ENCODE measurements at regions of chr20 and their contacts with region 1.

Region 1: DNA sequence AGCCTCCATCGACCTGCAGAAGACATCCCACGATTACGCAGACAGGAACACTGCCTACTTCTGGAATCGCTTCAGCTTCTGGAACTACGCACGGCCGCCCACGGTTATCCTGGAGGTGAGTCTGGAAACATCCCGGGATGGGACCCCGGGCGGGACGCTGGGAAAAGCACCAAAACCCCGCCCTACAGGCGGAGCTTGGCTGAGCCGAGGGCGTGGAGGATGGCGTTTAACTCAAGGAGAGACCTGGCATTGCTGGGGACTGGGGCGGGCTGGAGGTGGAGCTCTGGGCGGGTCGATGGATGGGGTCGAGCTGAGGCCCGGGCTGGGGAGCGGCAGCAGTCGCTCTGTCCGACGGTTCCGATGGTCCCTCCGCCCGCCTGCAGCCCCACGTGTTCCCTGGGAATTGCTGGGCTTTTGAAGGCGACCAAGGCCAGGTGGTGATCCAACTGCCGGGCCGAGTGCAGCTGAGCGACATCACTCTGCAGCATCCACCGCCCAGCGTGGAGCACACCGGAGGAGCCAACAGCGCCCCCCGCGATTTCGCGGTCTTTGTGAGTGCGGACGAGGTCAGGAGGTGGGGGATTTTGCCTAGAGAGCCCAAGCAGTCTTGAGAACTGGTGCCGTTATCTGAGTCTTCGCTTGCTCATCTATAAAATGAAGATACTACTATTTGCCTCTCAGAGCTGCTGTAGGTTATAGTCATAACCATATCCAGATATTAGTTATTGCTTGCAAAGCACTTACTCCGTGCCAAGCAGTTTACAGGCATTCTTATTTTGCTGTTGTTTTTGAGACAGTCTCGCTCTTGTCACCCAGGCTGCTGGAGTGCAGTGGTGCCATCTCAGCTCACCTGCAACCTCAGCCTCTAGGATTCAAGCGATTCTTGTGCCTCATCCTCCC is 3.8 kb downstream of the SPAG4 start:
- DNase-seq: peak; percentile 74
- ATAC-seq: peak; percentile 23
- H3K4me3 Mint-ChIP-seq: peak overlapping the region; percentile 87
- H3K27ac Mint-ChIP-seq: peak overlapping the region; percentile 66
- H3K4me1 Mint-ChIP-seq: peaks cover 40% of the 10 kb centered on the region
- H3K27me3 Mint-ChIP-seq: peaks cover 2% of the 10 kb centered on the region
- CTCF ChIP-seq: no peak

Region 2: GRCh38 chr20:34997131-34997561 is 622.3 kb before region 1 on chr20:
- CTCF ChIA-PET with region 1: no interaction called
- POLR2A ChIA-PET with region 1: no interaction called
- intact Hi-C with region 1: no loop called
- DNase-seq: no peak
- ATAC-seq: no peak
- H3K4me3 Mint-ChIP-seq: no peak overlapping the region
- H3K27ac Mint-ChIP-seq: no peak overlapping the region
- H3K4me1 Mint-ChIP-seq: peaks cover 3% of the 10 kb centered on the region
- H3K27me3 Mint-ChIP-seq: no peaks in the 10 kb centered on the region
- CTCF ChIP-seq: no peak

Region 3: GRCh38 chr20:35092524-35093266 is 526.8 kb before region 1 on chr20 and contains the start of gene TRPC4AP:
- CTCF ChIA-PET with region 1: no interaction called
- POLR2A ChIA-PET with region 1: no interaction called
- intact Hi-C with region 1: loop called (anchors 5 kb)
- DNase-seq: peak; percentile 87
- ATAC-seq: peak; percentile 97
- H3K4me3 Mint-ChIP-seq: peak within 1 kb of the TSS; percentile 95
- H3K27ac Mint-ChIP-seq: peak within 1 kb of the TSS; percentile 91
- H3K4me1 Mint-ChIP-seq: peaks cover 49% of the 10 kb centered on the region
- H3K27me3 Mint-ChIP-seq: no peaks in the 10 kb centered on the region
- CTCF ChIP-seq: peak; percentile 34
- total RNA-seq, gene TRPC4AP: 58.3 and 60.2 TPM in 2 replicates

Region 4: DNA sequence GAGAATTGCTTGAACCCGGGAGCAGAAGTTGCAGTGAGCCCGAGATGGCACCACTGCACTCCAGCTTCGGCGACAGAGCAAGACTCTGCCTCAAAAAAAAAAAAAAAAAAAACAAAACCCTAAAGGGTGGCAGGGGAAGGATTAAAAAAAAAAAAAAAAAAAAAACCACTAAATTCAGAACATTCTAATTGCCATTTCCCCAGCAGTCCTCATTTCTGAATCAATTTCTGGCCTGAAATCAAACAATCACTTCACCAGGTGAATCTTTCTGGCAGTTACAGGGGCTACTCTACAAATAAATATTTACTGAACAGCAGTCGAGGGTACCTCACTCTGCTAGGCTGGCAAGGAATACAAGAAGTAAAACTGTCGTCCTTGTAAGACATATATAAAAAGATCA is 208.8 kb before region 1 on chr20:
- CTCF ChIA-PET with region 1: no interaction called
- POLR2A ChIA-PET with region 1: interaction called, 4 read pairs
- intact Hi-C with region 1: loop called (anchors 5 kb)
- DNase-seq: no peak
- ATAC-seq: no peak
- H3K4me3 Mint-ChIP-seq: peak overlapping the region; percentile 97
- H3K27ac Mint-ChIP-seq: no peak overlapping the region
- H3K4me1 Mint-ChIP-seq: peaks cover 19% of the 10 kb centered on the region
- H3K27me3 Mint-ChIP-seq: no peaks in the 10 kb centered on the region
- CTCF ChIP-seq: no peak

Region 5: GRCh38 chr20:35463455-35464300 is 155.8 kb before region 1 on chr20:
- CTCF ChIA-PET with region 1: interaction called, 11 read pairs
- POLR2A ChIA-PET with region 1: interaction called, 6 read pairs
- intact Hi-C with region 1: loop called (anchors 1 kb)
- DNase-seq: no peak
- ATAC-seq: peak; percentile 84
- H3K4me3 Mint-ChIP-seq: no peak overlapping the region
- H3K27ac Mint-ChIP-seq: no peak overlapping the region
- H3K4me1 Mint-ChIP-seq: peaks cover 13% of the 10 kb centered on the region
- H3K27me3 Mint-ChIP-seq: no peaks in the 10 kb centered on the region
- CTCF ChIP-seq: no peak

Region 6: GRCh38 chr20:35541783-35542588 is 77.5 kb before region 1 on chr20 and contains the start of gene ERGIC3:
- CTCF ChIA-PET with region 1: interaction called, 4 read pairs
- POLR2A ChIA-PET with region 1: interaction called, 8 read pairs
- intact Hi-C with region 1: loop called (anchors 1 kb)
- DNase-seq: peak; percentile 97
- ATAC-seq: peak; percentile 92
- H3K4me3 Mint-ChIP-seq: peak within 1 kb of the TSS; percentile 92
- H3K27ac Mint-ChIP-seq: peak within 1 kb of the TSS; percentile 77
- H3K4me1 Mint-ChIP-seq: peaks cover 21% of the 10 kb centered on the region
- H3K27me3 Mint-ChIP-seq: no peaks in the 10 kb centered on the region
- CTCF ChIP-seq: no peak
- total RNA-seq, gene ERGIC3: 159 and 183 TPM in 2 replicates

Region 7: GRCh38 chr20:35638751-35639150 is 19.3 kb after region 1 on chr20:
- CTCF ChIA-PET with region 1: interaction called, 3 read pairs
- POLR2A ChIA-PET with region 1: no interaction called
- intact Hi-C with region 1: loop called (anchors 2 kb)
- DNase-seq: no peak
- ATAC-seq: no peak
- H3K4me3 Mint-ChIP-seq: no peak overlapping the region
- H3K27ac Mint-ChIP-seq: no peak overlapping the region
- H3K4me1 Mint-ChIP-seq: peaks cover 28% of the 10 kb centered on the region
- H3K27me3 Mint-ChIP-seq: no peaks in the 10 kb centered on the region
- CTCF ChIP-seq: no peak

Region 8: GRCh38 chr20:35673884-35674283 is 54.4 kb after region 1 on chr20:
- CTCF ChIA-PET with region 1: no interaction called
- POLR2A ChIA-PET with region 1: no interaction called
- intact Hi-C with region 1: no loop called
- DNase-seq: no peak
- ATAC-seq: no peak
- H3K4me3 Mint-ChIP-seq: no peak overlapping the region
- H3K27ac Mint-ChIP-seq: no peak overlapping the region
- H3K4me1 Mint-ChIP-seq: no peaks in the 10 kb centered on the region
- H3K27me3 Mint-ChIP-seq: no peaks in the 10 kb centered on the region
- CTCF ChIP-seq: no peak

Region 9: DNA sequence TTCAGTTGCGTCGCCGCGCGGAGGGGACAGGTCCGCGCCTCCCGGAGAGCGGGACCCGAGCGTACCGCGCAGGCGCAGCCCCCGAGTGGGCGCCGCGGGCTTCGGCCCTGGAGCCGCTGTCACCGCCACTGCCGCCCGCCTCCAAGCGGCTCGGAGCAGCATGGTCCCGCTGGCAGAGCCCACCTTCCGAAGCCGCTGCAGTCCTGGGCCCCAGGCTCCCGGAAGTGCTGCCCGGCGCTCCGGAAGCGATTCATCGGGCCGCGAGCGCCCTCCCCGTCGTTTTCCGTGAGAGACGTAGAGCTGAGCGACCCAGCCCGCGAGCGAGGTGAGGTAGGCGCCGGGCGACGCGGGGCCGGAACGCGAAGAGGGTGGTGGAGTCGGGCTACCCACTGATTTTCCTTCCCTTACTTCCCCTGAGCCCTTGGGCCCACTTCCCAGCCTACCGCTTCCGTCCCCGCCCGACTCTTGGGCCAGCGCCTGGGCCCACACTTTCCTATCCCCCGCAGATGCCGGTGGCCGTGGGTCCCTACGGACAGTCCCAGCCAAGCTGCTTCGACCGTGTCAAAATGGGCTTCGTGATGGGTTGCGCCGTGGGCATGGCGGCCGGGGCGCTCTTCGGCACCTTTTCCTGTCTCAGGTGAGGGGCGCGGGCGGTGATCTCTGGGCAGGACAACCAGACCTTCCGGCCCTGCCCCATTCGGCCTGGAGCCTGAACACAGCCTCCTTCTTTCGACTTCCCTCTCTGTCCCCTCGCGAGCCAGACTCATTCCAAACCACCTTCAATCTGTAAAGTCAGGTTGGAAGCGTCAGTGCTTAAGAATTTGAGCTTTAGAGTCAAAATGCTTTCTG is 79.9 kb after region 1 on chr20 and contains the starts of genes NFS1 and ROMO1:
- CTCF ChIA-PET with region 1: no interaction called
- POLR2A ChIA-PET with region 1: interaction called, 11 read pairs
- intact Hi-C with region 1: loop called (anchors 1 kb)
- DNase-seq: peak; percentile 85
- ATAC-seq: peak; percentile 90
- H3K4me3 Mint-ChIP-seq: peak within 1 kb of the TSS; percentile 97
- H3K27ac Mint-ChIP-seq: peak within 1 kb of the TSS; percentile 91
- H3K4me1 Mint-ChIP-seq: peaks cover 27% of the 10 kb centered on the region
- H3K27me3 Mint-ChIP-seq: no peaks in the 10 kb centered on the region
- CTCF ChIP-seq: no peak
- total RNA-seq, gene NFS1: 27.1 and 30.6 TPM in 2 replicates
- total RNA-seq, gene ROMO1: 96.8 and 131 TPM in 2 replicates

Measured in activated B cell treated with CpG ODN at 0.5 μM for 24 hours (primary cell).